ENCODE measurements at regions of chr14 and their contacts with region 1.

Region 1: GRCh38 chr14:70714055-70714621 is 72.4 kb downstream of the TTC9 start:
- DNase-seq: peak; percentile 71
- H3K4me3 Mint-ChIP-seq: no peak overlapping the region
- H3K27ac Mint-ChIP-seq: no peak overlapping the region
- H3K4me1 Mint-ChIP-seq: peaks cover 2% of the 10 kb centered on the region
- H3K27me3 Mint-ChIP-seq: no peaks in the 10 kb centered on the region

Region 2: GRCh38 chr14:70622111-70622712 is 91.9 kb before region 1 on chr14:
- CTCF ChIA-PET with region 1: interaction called, 51 read pairs
- intact Hi-C with region 1: loop called (anchors 1 kb)
- DNase-seq: peak; percentile 72
- H3K4me3 Mint-ChIP-seq: no peak overlapping the region
- H3K27ac Mint-ChIP-seq: no peak overlapping the region
- H3K4me1 Mint-ChIP-seq: no peaks in the 10 kb centered on the region
- H3K27me3 Mint-ChIP-seq: no peaks in the 10 kb centered on the region

Region 3: DNA sequence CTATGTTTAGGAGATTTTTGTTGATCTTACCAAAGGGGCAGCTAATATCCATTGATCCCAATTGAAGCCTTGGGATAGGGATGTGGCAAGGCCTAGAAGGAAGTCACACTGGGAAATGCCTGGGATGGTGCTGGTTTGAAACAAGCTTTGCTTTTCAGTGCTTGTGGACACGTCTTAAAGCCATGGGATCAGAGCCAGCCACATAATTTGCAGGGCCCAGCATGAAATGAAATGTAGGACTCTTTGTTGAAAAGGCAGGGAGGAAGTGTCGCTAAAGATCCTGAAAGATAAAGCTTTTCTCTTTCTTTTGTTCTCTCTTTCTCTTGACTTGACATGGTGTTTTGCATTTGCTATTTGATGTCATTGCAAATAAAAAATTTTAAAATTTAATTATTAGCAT is 67.4 kb before region 1 on chr14:
- CTCF ChIA-PET with region 1: interaction called, 10 read pairs
- intact Hi-C with region 1: loop called (anchors 1 kb)
- DNase-seq: no peak
- H3K4me3 Mint-ChIP-seq: peak overlapping the region; percentile 17
- H3K27ac Mint-ChIP-seq: peak overlapping the region; percentile 74
- H3K4me1 Mint-ChIP-seq: peaks cover 66% of the 10 kb centered on the region
- H3K27me3 Mint-ChIP-seq: no peaks in the 10 kb centered on the region

Region 4: GRCh38 chr14:70660949-70661893 is 52.9 kb before region 1 on chr14:
- CTCF ChIA-PET with region 1: interaction called, 4 read pairs
- intact Hi-C with region 1: loop called (anchors 1 kb)
- DNase-seq: peak; percentile 82
- H3K4me3 Mint-ChIP-seq: peak overlapping the region; percentile 62
- H3K27ac Mint-ChIP-seq: peak overlapping the region; percentile 96
- H3K4me1 Mint-ChIP-seq: peaks cover 91% of the 10 kb centered on the region
- H3K27me3 Mint-ChIP-seq: no peaks in the 10 kb centered on the region

Region 5: DNA sequence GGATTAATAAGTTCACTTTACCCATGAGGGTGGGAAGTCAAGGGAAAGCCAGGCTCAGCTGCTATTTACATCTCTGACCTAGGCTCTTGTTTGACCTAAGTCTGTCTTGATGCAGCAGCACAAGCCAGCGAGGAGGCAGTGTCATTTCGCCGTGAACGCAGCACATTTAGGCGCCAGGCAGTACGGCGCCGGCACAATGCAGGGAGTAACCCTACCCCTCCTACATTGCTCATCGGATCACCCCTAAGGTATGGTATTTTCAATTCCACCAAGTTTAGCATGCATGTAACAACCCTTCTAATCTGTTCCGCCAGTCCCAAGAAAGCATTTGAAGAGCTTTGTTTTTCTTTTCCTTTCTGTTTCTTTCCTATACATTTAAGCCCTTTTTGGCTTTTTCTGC is 274.3 kb after region 1 on chr14:
- CTCF ChIA-PET with region 1: no interaction called
- intact Hi-C with region 1: no loop called
- DNase-seq: peak; percentile 24
- H3K4me3 Mint-ChIP-seq: peak overlapping the region; percentile 44
- H3K27ac Mint-ChIP-seq: peak overlapping the region; percentile 4
- H3K4me1 Mint-ChIP-seq: peaks cover 23% of the 10 kb centered on the region
- H3K27me3 Mint-ChIP-seq: no peaks in the 10 kb centered on the region

Measured in activated naive CD4-positive, alpha-beta T cell treated with anti-CD3 and anti-CD28 coated beads for 36 hours (primary cell).